Mammary epithelial cell (primary cell): ENCODE measurements at regions of chr17 and their contacts with region 1.

Region 1: DNA sequence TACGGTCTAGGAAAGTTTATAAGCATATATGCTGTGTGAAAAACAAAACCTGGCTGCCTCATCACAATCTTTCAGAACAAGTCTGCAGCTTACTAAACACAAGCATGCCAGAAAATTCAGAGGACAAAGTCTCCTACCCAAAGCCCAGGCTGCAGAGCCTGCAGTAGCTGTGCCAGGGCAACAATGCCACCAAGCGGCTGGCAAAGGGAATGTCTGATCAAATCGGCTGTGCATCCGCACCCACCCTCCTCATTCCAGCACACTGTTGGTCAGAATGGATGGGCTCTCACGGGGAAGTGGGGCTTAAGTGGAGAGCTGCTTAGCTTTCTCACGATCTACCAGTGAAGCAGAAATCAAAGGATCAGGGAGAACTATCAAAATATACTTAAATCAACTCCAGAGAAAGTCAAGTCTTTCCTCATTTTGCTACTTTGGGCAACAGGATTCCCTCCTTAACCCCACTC is 73.5 kb downstream of the CYTH1 start:
- DNase-seq: peak; percentile 62
- H3K4me3 ChIP-seq: no peak overlapping the region
- H3K27ac ChIP-seq: peak overlapping the region; percentile 31
- H3K4me1 ChIP-seq: peaks cover 27% of the 10 kb centered on the region
- H3K27me3 ChIP-seq: no peaks in the 10 kb centered on the region
- CTCF ChIP-seq: peak; percentile 92 to 96

Region 2: GRCh38 chr17:78360371-78361224 is 347.9 kb before region 1 on chr17:
- CTCF ChIA-PET with region 1: no interaction called
- dilution Hi-C with region 1: no loop called
- in situ Hi-C with region 1: no loop called
- intact Hi-C with region 1: loop called (anchors 2 kb)
- DNase-seq: peak; percentile 81
- H3K4me3 ChIP-seq: peak overlapping the region; percentile 52 to 87 (median 56)
- H3K27ac ChIP-seq: peak overlapping the region; percentile 39
- H3K4me1 ChIP-seq: peaks cover 34% of the 10 kb centered on the region
- H3K27me3 ChIP-seq: no peaks in the 10 kb centered on the region
- CTCF ChIP-seq: peak; percentile 80 to 98

Region 3: DNA sequence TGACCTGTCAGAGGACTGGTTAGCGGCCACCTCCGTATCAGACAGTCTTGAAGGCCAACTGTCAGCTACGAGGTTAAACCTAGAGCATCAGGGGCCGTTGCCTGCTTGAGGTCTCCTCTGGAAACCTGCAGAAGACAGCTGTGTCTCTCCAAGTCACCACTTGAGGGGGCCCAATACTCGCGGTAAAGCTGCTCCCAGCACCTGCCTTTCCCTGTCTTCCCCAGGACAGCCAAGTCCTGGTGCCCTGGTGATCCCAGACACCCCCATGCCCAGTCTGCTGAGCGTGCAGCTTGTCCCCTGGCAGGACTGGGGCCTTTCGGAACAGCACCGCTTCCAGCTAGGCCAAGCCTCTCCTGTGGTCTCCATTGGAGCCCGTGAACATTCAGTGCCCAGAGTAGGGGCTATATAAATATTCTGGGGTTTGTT is 211.4 kb before region 1 on chr17:
- CTCF ChIA-PET with region 1: interaction called, 5 read pairs
- dilution Hi-C with region 1: no loop called
- in situ Hi-C with region 1: loop called (anchors 5 to 10 kb)
- intact Hi-C with region 1: loop called (anchors 1 kb)
- DNase-seq: peak; percentile 64
- H3K4me3 ChIP-seq: no peak overlapping the region
- H3K27ac ChIP-seq: no peak overlapping the region
- H3K4me1 ChIP-seq: no peaks in the 10 kb centered on the region
- H3K27me3 ChIP-seq: no peaks in the 10 kb centered on the region
- CTCF ChIP-seq: peak; percentile 69 to 84

Region 4: GRCh38 chr17:78605429-78605828 is 103.1 kb before region 1 on chr17:
- CTCF ChIA-PET with region 1: no interaction called
- dilution Hi-C with region 1: loop called (anchors 5 kb)
- in situ Hi-C with region 1: no loop called
- intact Hi-C with region 1: loop called (anchors 2 kb)
- DNase-seq: no peak
- H3K4me3 ChIP-seq: no peak overlapping the region
- H3K27ac ChIP-seq: no peak overlapping the region
- H3K4me1 ChIP-seq: no peaks in the 10 kb centered on the region
- H3K27me3 ChIP-seq: no peaks in the 10 kb centered on the region
- CTCF ChIP-seq: no peak

Region 5: GRCh38 chr17:78745407-78746088 is 37.0 kb after region 1 on chr17:
- CTCF ChIA-PET with region 1: no interaction called
- dilution Hi-C with region 1: no loop called
- in situ Hi-C with region 1: no loop called
- intact Hi-C with region 1: loop called (anchors 1 kb)
- DNase-seq: no peak
- H3K4me3 ChIP-seq: no peak overlapping the region
- H3K27ac ChIP-seq: no peak overlapping the region
- H3K4me1 ChIP-seq: peaks cover 24% of the 10 kb centered on the region
- H3K27me3 ChIP-seq: no peaks in the 10 kb centered on the region
- CTCF ChIP-seq: peak; percentile 40 to 48